CD8-positive, alpha-beta T cell (primary cell): ENCODE measurements at regions of chr19 and their contacts with region 1.

Region 1: GRCh38 chr19:10653715-10654492 is at the start of gene ILF3:
- DNase-seq: peak; percentile 100
- ATAC-seq: peak; percentile 77
- H3K4me3 ChIP-seq: peak within 1 kb of the TSS; percentile 83
- H3K4me3 Mint-ChIP-seq: peak within 1 kb of the TSS; percentile 94
- H3K27ac ChIP-seq: peak within 1 kb of the TSS; percentile 98 to 99
- H3K27ac Mint-ChIP-seq: peak within 1 kb of the TSS; percentile 98
- H3K4me1 ChIP-seq: peaks cover 41% of the 10 kb centered on the region
- H3K4me1 Mint-ChIP-seq: peaks cover 44% of the 10 kb centered on the region
- H3K27me3 ChIP-seq: no peaks in the 10 kb centered on the region
- H3K27me3 Mint-ChIP-seq: no peaks in the 10 kb centered on the region
- CTCF ChIP-seq: no peak
- total RNA-seq, gene ILF3: 604 to 613 TPM

Region 2: GRCh38 chr19:9406798-9407352 is 1247.0 kb before region 1 on chr19:
- CTCF ChIA-PET with region 1: no interaction called
- POLR2A ChIA-PET with region 1: no interaction called
- intact Hi-C with region 1: no loop called
- DNase-seq: peak in 8 of 9 experiments; percentile 12 to 58 (median 52)
- ATAC-seq: peak; percentile 69
- H3K4me3 ChIP-seq: peak overlapping the region; percentile 47 to 76
- H3K4me3 Mint-ChIP-seq: peak overlapping the region; percentile 79
- H3K27ac ChIP-seq: no peak overlapping the region
- H3K27ac Mint-ChIP-seq: peak overlapping the region; percentile 41
- H3K4me1 ChIP-seq: peaks cover 11% of the 10 kb centered on the region
- H3K4me1 Mint-ChIP-seq: peaks cover 17% of the 10 kb centered on the region
- H3K27me3 ChIP-seq: no peaks in the 10 kb centered on the region
- H3K27me3 Mint-ChIP-seq: no peaks in the 10 kb centered on the region
- CTCF ChIP-seq: no peak

Region 3: GRCh38 chr19:10602330-10603083 is 51.4 kb before region 1 on chr19:
- CTCF ChIA-PET with region 1: interaction called, 3 read pairs
- POLR2A ChIA-PET with region 1: interaction called, 21 read pairs
- intact Hi-C with region 1: loop called (anchors 1 kb)
- DNase-seq: peak; percentile 79 to 94 (median 86)
- ATAC-seq: peak; percentile 82
- H3K4me3 ChIP-seq: peak overlapping the region; percentile 91 to 99
- H3K4me3 Mint-ChIP-seq: peak overlapping the region; percentile 96
- H3K27ac ChIP-seq: peak overlapping the region; percentile 99 to 100
- H3K27ac Mint-ChIP-seq: peak overlapping the region; percentile 99
- H3K4me1 ChIP-seq: peaks cover 38% of the 10 kb centered on the region
- H3K4me1 Mint-ChIP-seq: peaks cover 29% of the 10 kb centered on the region
- H3K27me3 ChIP-seq: no peaks in the 10 kb centered on the region
- H3K27me3 Mint-ChIP-seq: no peaks in the 10 kb centered on the region
- CTCF ChIP-seq: no peak

Region 4: DNA sequence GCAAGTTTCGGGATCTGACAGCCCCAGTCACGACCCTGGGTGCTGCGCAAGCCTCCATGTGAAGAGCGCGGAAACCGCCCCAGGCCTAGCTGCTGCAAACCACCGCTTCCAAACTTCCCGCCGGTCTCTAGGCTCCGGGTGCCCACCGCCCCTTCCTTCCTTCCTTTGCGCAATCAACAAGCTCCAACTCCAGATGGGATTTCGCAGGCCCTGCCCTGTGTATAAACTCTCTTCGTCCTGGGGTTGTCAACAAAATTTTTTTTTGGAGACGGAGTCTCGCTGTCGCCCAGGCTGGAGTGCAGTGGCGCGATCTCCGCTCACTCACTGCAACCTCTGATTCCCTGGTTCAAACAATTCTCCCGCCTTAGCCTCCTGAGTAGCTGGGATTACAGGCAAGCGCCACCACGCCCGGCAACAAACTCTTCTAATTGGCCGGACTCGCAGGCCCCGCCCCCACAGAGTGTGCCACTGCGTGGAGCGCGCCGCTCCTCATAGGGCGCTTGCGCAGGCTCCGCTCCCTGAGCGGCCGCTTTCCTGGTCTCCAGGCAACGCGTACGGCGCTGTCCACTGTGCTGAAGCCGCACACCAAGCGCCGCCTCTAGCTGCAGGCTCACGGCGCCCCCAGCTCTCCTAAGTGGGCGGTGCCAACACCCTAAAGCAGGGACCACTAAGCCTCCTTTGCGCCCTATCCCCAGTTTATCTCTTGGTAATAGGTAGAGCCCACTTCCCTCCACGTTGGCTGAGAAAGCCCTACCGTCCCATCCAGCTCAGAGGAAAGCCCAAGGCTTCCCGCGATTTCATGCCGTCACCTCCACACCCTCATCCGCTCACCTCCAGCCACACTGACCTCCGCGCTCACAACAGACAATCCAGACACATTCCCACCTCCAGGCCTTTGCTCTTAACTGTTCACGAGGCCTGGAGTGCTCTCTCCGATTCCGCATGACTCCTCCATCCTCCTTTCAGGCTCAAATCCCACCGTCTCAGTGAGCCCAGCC is 41.8 kb after region 1 on chr19:
- CTCF ChIA-PET with region 1: interaction called, 10 read pairs
- POLR2A ChIA-PET with region 1: interaction called, 3 read pairs
- intact Hi-C with region 1: loop called (anchors 1 to 2 kb)
- DNase-seq: peak; percentile 77 to 94 (median 87)
- ATAC-seq: peak; percentile 97
- H3K4me3 ChIP-seq: peak overlapping the region; percentile 33 to 58
- H3K4me3 Mint-ChIP-seq: peak overlapping the region; percentile 78
- H3K27ac ChIP-seq: no peak overlapping the region
- H3K27ac Mint-ChIP-seq: no peak overlapping the region
- H3K4me1 ChIP-seq: peaks cover 12% of the 10 kb centered on the region
- H3K4me1 Mint-ChIP-seq: peaks cover 17% of the 10 kb centered on the region
- H3K27me3 ChIP-seq: peaks cover 0 to 2% of the 10 kb centered on the region in 2 experiments
- H3K27me3 Mint-ChIP-seq: peaks cover 5% of the 10 kb centered on the region
- CTCF ChIP-seq: no peak

Region 5: DNA sequence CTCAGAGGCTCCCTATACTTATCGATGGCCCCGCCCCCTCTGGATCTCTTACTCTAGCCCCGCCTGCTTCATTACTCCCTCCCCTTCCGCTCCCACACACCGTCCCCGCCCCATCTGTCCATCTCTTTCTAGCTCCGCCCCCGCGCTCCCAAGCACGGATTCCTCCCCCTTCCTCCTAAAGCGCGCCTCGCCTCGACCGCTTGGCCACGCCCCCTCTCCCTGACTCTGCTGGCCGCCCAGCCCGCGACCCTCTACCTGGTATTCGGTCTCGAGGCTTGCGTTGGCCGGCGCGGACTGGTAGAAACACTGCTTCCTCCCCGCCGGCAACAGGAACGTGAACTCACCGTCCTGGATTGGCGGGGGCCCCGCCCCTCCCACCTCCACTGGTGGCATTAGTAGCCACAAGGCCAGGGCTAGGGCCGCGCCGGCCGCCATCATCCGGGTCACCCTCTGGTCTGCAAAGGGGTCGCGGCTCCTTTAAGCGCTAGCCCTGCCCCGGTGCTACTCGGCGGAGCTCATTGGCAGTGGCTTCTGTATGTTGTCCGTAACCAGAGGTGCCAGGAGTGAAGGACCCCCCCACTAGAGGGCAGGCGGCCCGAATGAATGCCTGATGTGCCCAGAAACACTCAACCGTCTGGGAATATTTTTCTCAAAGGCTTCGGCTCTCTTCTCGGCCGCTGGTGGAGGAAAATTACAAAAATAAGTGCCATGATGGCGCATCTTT is 182.0 kb after region 1 on chr19 and contains the start of gene TMED1:
- CTCF ChIA-PET with region 1: no interaction called
- POLR2A ChIA-PET with region 1: interaction called, 4 read pairs
- intact Hi-C with region 1: loop called in 1 of 2 experiments (anchors 1 kb)
- DNase-seq: peak; percentile 82 to 98 (median 93)
- ATAC-seq: peak; percentile 86
- H3K4me3 ChIP-seq: peak within 1 kb of the TSS; percentile 88 to 96
- H3K4me3 Mint-ChIP-seq: peak within 1 kb of the TSS; percentile 98
- H3K27ac ChIP-seq: peak within 1 kb of the TSS; percentile 87 to 96
- H3K27ac Mint-ChIP-seq: peak within 1 kb of the TSS; percentile 99
- H3K4me1 ChIP-seq: peaks cover 14% of the 10 kb centered on the region
- H3K4me1 Mint-ChIP-seq: peaks cover 9% of the 10 kb centered on the region
- H3K27me3 ChIP-seq: no peaks in the 10 kb centered on the region
- H3K27me3 Mint-ChIP-seq: no peaks in the 10 kb centered on the region
- CTCF ChIP-seq: no peak
- total RNA-seq, gene TMED1: 8.2 to 13.5 TPM

Region 6: GRCh38 chr19:11380653-11381534 is 727.0 kb after region 1 on chr19:
- CTCF ChIA-PET with region 1: no interaction called
- POLR2A ChIA-PET with region 1: no interaction called
- intact Hi-C with region 1: loop called in 1 of 2 experiments (anchors 5 kb)
- DNase-seq: peak; percentile 93 to 99 (median 96)
- ATAC-seq: peak; percentile 83
- H3K4me3 ChIP-seq: peak overlapping the region; percentile 64 to 72
- H3K4me3 Mint-ChIP-seq: peak overlapping the region; percentile 94
- H3K27ac ChIP-seq: peak overlapping the region; percentile 80 to 89
- H3K27ac Mint-ChIP-seq: peak overlapping the region; percentile 99
- H3K4me1 ChIP-seq: peaks cover 47% of the 10 kb centered on the region
- H3K4me1 Mint-ChIP-seq: peaks cover 45% of the 10 kb centered on the region
- H3K27me3 ChIP-seq: peaks cover 6 to 23% of the 10 kb centered on the region in 2 experiments
- H3K27me3 Mint-ChIP-seq: peaks cover 19% of the 10 kb centered on the region
- CTCF ChIP-seq: peak; percentile 88